ENCODE measurements at regions of chrX and their contacts with region 1.

Region 1: GRCh38 chrX:110156167-110156754 is 153.3 kb downstream of the TMEM164 start:
- DNase-seq: no peak
- ATAC-seq: no peak
- H3K4me3 ChIP-seq: no peak overlapping the region
- H3K27ac ChIP-seq: no peak overlapping the region
- H3K4me1 ChIP-seq: peaks cover 0 to 14% (median 5%) of the 10 kb centered on the region in 9 donors
- H3K27me3 ChIP-seq: peaks cover 0 to 5% (median 0%) of the 10 kb centered on the region in 7 donors
- CTCF ChIP-seq: peak in 8 of 9 donors; percentile 17 to 62 (median 55)

Region 2: GRCh38 chrX:110125446-110126162 is 30.7 kb before region 1 on chrX:
- intact Hi-C with region 1: no loop called
- DNase-seq: no peak
- ATAC-seq: peak in 5 of 8 donors; percentile 29 to 68 (median 62)
- H3K4me3 ChIP-seq: no peak overlapping the region
- H3K27ac ChIP-seq: no peak overlapping the region
- H3K4me1 ChIP-seq: peaks cover 0 to 15% (median 2%) of the 10 kb centered on the region in 9 donors
- H3K27me3 ChIP-seq: peaks cover 0 to 29% (median 0%) of the 10 kb centered on the region in 7 donors
- CTCF ChIP-seq: peak in 5 of 9 donors; percentile 6 to 39 (median 26)

Region 3: DNA sequence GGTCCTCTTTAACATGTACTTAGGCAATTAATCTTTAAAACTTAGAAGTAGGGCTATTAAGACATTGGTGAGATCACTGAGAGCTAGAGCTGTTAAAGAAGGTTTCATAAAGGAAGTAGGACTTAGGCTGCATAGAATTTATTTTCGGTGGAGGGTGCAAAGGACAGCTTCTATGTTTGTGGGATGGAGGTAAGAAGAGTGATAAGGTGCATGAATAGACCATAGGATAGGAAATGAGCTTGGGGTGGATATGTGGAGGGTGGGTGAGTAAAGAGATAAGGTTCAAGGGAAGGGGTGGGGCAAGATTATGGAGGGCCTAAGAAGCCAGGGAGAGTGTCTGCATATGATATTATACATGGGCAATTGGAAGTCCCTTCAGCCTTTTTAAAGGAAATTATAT is 218.3 kb after region 1 on chrX:
- intact Hi-C with region 1: no loop called
- DNase-seq: no peak
- ATAC-seq: no peak
- H3K4me3 ChIP-seq: no peak overlapping the region
- H3K27ac ChIP-seq: no peak overlapping the region
- H3K4me1 ChIP-seq: no peaks in the 10 kb centered on the region
- H3K27me3 ChIP-seq: peaks cover 0 to 54% (median 0%) of the 10 kb centered on the region in 7 donors
- CTCF ChIP-seq: no peak

Region 4: GRCh38 chrX:110402479-110403230 is 246.4 kb after region 1 on chrX:
- intact Hi-C with region 1: loop called in 2 of 10 experiments (anchors 5 kb)
- DNase-seq: peak in 1 of 2 donors; percentile 15
- ATAC-seq: peak in 7 of 8 donors; percentile 45 to 90 (median 80)
- H3K4me3 ChIP-seq: no peak overlapping the region
- H3K27ac ChIP-seq: no peak overlapping the region
- H3K4me1 ChIP-seq: peaks cover 0 to 4% (median 0%) of the 10 kb centered on the region in 9 donors
- H3K27me3 ChIP-seq: peaks cover 0 to 43% (median 0%) of the 10 kb centered on the region in 7 donors
- CTCF ChIP-seq: no peak

Region 5: DNA sequence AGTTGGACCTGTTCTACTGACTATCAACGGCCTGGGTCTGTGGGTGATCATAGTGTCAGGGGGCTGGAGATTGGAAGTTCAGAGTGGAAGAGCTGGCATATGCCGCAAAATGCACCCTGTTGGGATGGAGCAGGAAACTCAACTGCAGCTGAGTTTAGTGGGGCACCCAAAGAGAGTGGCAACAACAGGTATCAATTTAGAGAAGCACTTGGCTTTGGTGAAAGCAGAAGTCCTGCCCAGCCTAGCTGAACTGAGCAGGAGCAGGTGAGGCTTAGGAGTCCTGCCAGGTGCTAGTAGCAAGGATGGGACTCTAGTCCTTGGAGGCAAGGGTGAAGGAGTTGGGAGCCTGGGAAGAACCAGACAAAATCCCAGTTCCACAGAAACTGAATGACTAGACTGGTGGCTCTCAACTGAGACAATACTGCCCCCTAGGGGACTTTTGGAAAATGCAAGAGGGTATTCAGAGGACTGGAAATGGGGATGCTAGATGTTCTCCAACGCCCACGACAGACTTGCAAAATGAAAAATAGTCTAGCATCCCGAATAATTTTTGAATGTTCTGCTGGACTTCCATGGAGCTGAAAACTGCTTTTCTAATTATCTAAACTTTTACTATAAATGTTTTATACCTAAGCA is 251.8 kb after region 1 on chrX:
- intact Hi-C with region 1: loop called (anchors 1 to 5 kb)
- DNase-seq: peak in 1 of 2 donors; percentile 56
- ATAC-seq: peak in 7 of 8 donors; percentile 38 to 73 (median 69)
- H3K4me3 ChIP-seq: no peak overlapping the region
- H3K27ac ChIP-seq: no peak overlapping the region
- H3K4me1 ChIP-seq: peaks cover 0 to 4% (median 0%) of the 10 kb centered on the region in 9 donors
- H3K27me3 ChIP-seq: peaks cover 0 to 48% (median 0%) of the 10 kb centered on the region in 7 donors
- CTCF ChIP-seq: peak; percentile 43 to 74 (median 67)

Region 6: GRCh38 chrX:110412971-110413721 is 256.9 kb after region 1 on chrX:
- intact Hi-C with region 1: loop called in 9 of 10 experiments (anchors 1 to 5 kb)
- DNase-seq: peak; percentile 49 to 51
- ATAC-seq: peak; percentile 76 to 92 (median 88)
- H3K4me3 ChIP-seq: no peak overlapping the region
- H3K27ac ChIP-seq: no peak overlapping the region
- H3K4me1 ChIP-seq: peaks cover 0 to 13% (median 0%) of the 10 kb centered on the region in 9 donors
- H3K27me3 ChIP-seq: peaks cover 0 to 67% (median 0%) of the 10 kb centered on the region in 7 donors
- CTCF ChIP-seq: peak; percentile 50 to 90 (median 76)

Measured in heart right ventricle (tissue), 16 donors.